Activated B cell treated with CpG ODN at 0.5 μM for 24 hours (primary cell): ENCODE measurements at regions of chr16 and their contacts with region 1.

Region 1: DNA sequence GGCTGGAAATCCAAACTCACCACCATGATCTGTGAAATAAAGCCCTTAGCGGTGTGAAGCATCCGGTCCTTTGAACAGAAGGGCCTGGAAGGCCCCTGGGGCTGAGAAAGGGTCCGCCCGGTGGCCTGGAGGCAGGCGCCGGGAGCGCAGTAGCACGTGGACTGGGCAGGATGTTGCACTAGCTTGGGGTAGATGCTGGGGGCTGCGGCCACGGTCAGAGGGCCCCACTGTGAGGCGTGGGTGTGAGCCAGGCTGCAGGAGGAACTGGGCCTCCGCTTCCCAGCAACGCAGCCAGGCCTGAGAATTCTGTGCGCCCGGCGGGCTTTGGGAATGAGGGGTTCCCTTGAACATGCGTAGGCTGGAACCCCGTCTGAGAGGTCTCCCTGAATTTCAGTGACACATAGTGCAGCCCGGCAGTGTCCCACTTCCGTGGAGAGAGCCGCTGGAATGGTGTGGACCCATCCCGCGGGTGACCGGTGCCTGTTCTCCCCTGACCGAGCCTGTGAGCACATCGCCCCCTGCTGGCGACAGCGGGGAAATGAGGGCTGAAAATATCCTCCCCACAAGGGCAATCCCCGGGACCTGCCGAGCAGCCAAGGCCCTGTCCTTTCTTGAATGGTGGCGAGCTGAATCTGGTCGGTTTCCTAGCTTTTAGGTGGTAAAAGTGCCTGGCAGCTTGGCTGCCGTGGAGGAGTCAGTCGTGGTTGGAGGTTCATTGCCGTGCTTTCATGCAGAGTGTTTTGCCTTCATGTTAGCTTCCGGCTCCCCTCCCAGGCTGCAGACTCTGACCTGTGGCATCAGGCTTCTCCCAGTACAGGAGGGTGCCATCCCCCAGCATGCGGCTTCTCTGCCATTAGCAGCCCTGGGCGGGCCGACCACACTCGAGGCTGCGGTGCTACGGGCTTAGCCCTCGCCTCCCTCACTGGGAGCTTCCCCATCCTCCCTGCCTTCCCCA is 43.8 kb downstream of the DNAJA2 start:
- DNase-seq: peak; percentile 69
- ATAC-seq: peak; percentile 76
- H3K4me3 Mint-ChIP-seq: no peak overlapping the region
- H3K27ac Mint-ChIP-seq: no peak overlapping the region
- H3K4me1 Mint-ChIP-seq: peaks cover 12% of the 10 kb centered on the region
- H3K27me3 Mint-ChIP-seq: no peaks in the 10 kb centered on the region
- CTCF ChIP-seq: peak; percentile 59

Region 2: DNA sequence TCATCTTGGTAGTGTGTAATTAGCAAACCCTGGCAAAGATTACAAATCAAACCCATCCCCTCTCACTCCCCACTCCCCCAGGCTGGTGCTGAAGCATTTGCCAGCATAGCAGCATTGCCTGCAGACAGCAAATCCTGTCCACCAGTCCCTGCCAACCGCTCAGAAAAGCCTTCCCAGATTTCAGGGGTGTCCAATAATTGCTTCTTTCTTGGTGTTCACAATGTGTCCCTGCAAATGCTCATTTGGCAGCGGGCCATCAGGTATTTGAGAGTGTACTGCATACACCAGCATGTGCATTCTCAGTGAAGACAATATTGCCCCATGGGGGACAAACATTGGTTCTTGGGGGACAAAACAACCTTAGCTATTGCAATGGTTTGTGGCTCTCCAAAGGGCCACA is 212.0 kb before region 1 on chr16:
- CTCF ChIA-PET with region 1: no interaction called
- POLR2A ChIA-PET with region 1: no interaction called
- intact Hi-C with region 1: no loop called
- DNase-seq: no peak
- ATAC-seq: no peak
- H3K4me3 Mint-ChIP-seq: no peak overlapping the region
- H3K27ac Mint-ChIP-seq: no peak overlapping the region
- H3K4me1 Mint-ChIP-seq: peaks cover 10% of the 10 kb centered on the region
- H3K27me3 Mint-ChIP-seq: no peaks in the 10 kb centered on the region
- CTCF ChIP-seq: no peak

Region 3: GRCh38 chr16:46853713-46854443 is 75.8 kb before region 1 on chr16:
- CTCF ChIA-PET with region 1: interaction called, 57 read pairs
- POLR2A ChIA-PET with region 1: no interaction called
- intact Hi-C with region 1: loop called (anchors 1 kb)
- DNase-seq: peak; percentile 53
- ATAC-seq: peak; percentile 72
- H3K4me3 Mint-ChIP-seq: no peak overlapping the region
- H3K27ac Mint-ChIP-seq: no peak overlapping the region
- H3K4me1 Mint-ChIP-seq: peaks cover 17% of the 10 kb centered on the region
- H3K27me3 Mint-ChIP-seq: no peaks in the 10 kb centered on the region
- CTCF ChIP-seq: peak; percentile 63

Region 4: DNA sequence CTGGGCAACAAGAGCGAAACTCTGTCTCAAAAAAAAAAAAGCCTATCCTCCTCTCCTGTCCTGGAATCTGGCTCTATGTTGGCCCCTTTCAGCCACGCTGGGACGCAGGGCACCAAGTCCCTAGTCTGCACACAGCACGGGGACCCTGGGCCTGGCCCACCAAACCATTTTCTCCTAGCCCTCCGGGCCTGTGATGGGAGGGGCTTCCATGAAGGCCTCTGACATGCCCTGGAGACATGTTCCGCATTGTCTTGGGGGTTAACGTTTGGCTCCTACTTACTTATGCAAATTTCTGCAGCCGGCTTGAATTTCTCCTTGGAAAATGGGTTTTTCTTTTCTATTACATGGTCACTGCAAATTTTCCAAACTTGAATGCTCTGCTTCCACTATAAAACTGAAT is 58.1 kb before region 1 on chr16:
- CTCF ChIA-PET with region 1: no interaction called
- POLR2A ChIA-PET with region 1: no interaction called
- intact Hi-C with region 1: no loop called
- DNase-seq: no peak
- ATAC-seq: no peak
- H3K4me3 Mint-ChIP-seq: no peak overlapping the region
- H3K27ac Mint-ChIP-seq: no peak overlapping the region
- H3K4me1 Mint-ChIP-seq: no peaks in the 10 kb centered on the region
- H3K27me3 Mint-ChIP-seq: no peaks in the 10 kb centered on the region
- CTCF ChIP-seq: no peak

Region 5: GRCh38 chr16:46973207-46973995 is 43.7 kb after region 1 on chr16 and contains the start of gene DNAJA2:
- CTCF ChIA-PET with region 1: no interaction called
- POLR2A ChIA-PET with region 1: no interaction called
- intact Hi-C with region 1: loop called (anchors 1 kb)
- DNase-seq: peak; percentile 94
- ATAC-seq: peak; percentile 93
- H3K4me3 Mint-ChIP-seq: peak within 1 kb of the TSS; percentile 95
- H3K27ac Mint-ChIP-seq: peak within 1 kb of the TSS; percentile 98
- H3K4me1 Mint-ChIP-seq: peaks cover 44% of the 10 kb centered on the region
- H3K27me3 Mint-ChIP-seq: no peaks in the 10 kb centered on the region
- CTCF ChIP-seq: no peak
- total RNA-seq, gene DNAJA2: 54.4 and 57.1 TPM in 2 replicates